ENCODE measurements at regions of chr10 and their contacts with region 1.

Region 1: GRCh38 chr10:46106410-46107255 is 60.6 kb upstream of the MSMB start:
- DNase-seq: peak; percentile 62 to 75 (median 70)
- ATAC-seq: peak; percentile 99
- H3K4me3 ChIP-seq: peak overlapping the region; percentile 45
- H3K27ac ChIP-seq: no peak overlapping the region; the same call in 2 of the 3 replicates
- H3K4me1 ChIP-seq: peaks cover 0 to 20% of the 10 kb centered on the region in 2 experiments; a peak in 3 of 5 replicates
- H3K27me3 ChIP-seq: peaks cover 8 to 13% of the 10 kb centered on the region in 2 experiments
- CTCF ChIP-seq: peak in 1 of 3 experiments; percentile 6; a peak in 1 of 6 replicates
- EP300 ChIP-seq: no peak
- POLR2A ChIP-seq: peak; percentile 71
- RAD21 ChIP-seq: peak in 1 of 2 experiments; percentile 34; a peak in 2 of 4 replicates

Region 2: DNA sequence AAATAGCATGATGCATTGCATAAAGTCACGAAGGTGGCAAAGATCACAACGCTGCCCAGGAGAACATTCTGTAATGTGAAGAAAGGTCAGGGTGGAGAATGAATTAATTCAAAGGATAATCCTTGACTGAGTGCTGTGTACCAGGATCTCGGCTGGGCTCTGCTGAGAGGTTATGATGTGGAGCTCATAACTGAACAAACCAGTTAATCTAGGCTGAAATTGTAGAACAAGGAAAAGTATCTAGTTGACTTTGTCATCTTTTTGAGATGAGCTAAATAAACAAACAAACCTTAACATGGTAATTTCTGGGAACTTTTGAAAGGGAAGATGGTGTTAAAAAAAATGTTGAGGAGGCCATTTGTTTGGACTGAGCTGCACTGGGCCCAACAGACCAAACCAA is 66.6 kb before region 1 on chr10:
- CTCF ChIA-PET with region 1: no interaction called
- POLR2A ChIA-PET with region 1: no interaction called
- in situ Hi-C with region 1: no loop called
- intact Hi-C with region 1: no loop called
- DNase-seq: no peak
- ATAC-seq: no peak
- H3K4me3 ChIP-seq: no peak overlapping the region
- H3K27ac ChIP-seq: no peak overlapping the region
- H3K4me1 ChIP-seq: peaks cover 0 to 4% of the 10 kb centered on the region in 2 experiments; a peak in 3 of 5 replicates
- H3K27me3 ChIP-seq: no peaks in the 10 kb centered on the region
- CTCF ChIP-seq: no peak
- EP300 ChIP-seq: no peak
- POLR2A ChIP-seq: no peak
- RAD21 ChIP-seq: no peak

Region 3: DNA sequence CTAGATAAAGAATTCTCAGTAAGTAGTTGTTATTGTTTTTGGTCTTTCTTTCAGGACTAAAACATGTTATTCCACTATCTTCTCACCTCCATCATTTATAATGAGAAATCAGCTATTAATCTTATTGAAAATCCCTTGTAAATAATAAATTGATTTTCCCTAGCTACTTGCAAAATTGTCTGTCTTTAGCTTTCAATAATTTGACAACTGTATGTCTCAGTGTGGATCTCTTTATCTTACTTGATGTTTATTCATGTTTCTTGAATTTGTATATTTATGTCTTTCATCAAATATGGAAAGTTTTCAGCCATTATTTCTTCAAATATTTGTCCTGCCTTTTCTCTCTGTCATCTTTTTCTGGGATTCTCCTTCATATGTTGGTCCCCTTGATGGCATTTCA is 63.1 kb after region 1 on chr10:
- CTCF ChIA-PET with region 1: no interaction called
- POLR2A ChIA-PET with region 1: no interaction called
- in situ Hi-C with region 1: loop called (anchors 5 kb)
- intact Hi-C with region 1: no loop called
- DNase-seq: no peak
- ATAC-seq: no peak
- H3K4me3 ChIP-seq: no peak overlapping the region
- H3K27ac ChIP-seq: no peak overlapping the region
- H3K4me1 ChIP-seq: no peaks in the 10 kb centered on the region
- H3K27me3 ChIP-seq: no peaks in the 10 kb centered on the region
- CTCF ChIP-seq: no peak
- EP300 ChIP-seq: no peak
- POLR2A ChIP-seq: no peak
- RAD21 ChIP-seq: no peak

Region 4: DNA sequence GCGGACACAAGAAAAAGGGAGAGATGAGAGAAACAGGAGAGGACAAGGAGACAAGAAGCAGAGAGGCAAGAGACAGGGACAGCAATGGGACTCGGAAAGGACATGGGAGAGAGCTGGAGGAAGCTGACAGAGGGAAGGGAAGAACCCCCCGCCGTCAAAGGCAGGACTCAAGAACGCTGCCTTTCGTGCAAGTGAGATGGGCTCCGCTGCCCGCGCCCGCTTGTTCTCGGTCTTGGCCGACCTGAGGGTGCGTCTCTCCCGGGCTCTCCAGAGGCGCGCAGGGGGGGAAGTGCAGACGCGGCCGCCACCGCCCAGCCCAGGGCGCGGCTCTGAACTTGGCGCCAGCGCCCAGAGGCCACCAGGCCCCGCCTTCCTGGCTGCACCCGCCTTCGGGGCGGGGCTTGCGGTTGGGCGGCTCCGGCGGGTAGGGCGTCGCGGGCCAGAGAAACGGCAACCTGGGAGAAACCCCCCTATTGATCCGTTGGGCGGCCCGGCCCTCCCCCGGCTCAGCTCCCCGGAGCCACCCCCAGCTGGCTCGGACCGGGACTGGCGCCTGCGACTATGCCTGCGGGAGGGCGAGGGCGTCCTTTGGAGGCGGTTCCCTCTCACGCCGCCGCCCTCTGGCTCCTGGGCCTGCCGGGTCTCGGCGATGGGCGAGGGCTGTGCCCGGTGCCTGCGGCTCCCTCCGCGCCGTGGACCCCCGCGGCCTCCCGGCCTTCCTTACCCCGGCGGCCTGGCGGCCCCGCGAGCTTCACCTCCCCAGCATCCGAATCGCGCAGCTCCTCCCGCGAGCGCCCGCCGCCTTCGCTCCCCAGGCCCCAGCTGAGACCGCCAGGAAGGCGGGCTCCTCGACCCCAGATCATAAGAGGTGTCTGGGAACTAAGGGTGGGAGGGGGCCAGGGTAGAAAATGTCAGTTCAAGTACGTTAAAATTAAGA is 177.9 kb after region 1 on chr10:
- CTCF ChIA-PET with region 1: no interaction called
- POLR2A ChIA-PET with region 1: interaction called, 4 read pairs
- in situ Hi-C with region 1: loop called (anchors 5 kb)
- intact Hi-C with region 1: no loop called
- DNase-seq: peak; percentile 95 to 100 (median 99)
- ATAC-seq: peak; percentile 99
- H3K4me3 ChIP-seq: peak overlapping the region; percentile 61
- H3K27ac ChIP-seq: peak overlapping the region; percentile 21; the same call in 2 of the 3 replicates
- H3K4me1 ChIP-seq: peaks cover 2 to 22% of the 10 kb centered on the region in 2 experiments; a peak in 3 of 5 replicates
- H3K27me3 ChIP-seq: peaks cover 32 to 57% of the 10 kb centered on the region in 2 experiments; a peak in 4 of 5 replicates
- CTCF ChIP-seq: peak in 1 of 3 experiments; percentile 1; a peak in 1 of 6 replicates
- EP300 ChIP-seq: 0 out of 2 replicates have a peak, but pooled peaks have one; percentile 2
- POLR2A ChIP-seq: peak; percentile 46; the same call in 1 of the 2 replicates
- RAD21 ChIP-seq: peak in 1 of 2 experiments; percentile 10; a peak in 1 of 4 replicates

Region 5: DNA sequence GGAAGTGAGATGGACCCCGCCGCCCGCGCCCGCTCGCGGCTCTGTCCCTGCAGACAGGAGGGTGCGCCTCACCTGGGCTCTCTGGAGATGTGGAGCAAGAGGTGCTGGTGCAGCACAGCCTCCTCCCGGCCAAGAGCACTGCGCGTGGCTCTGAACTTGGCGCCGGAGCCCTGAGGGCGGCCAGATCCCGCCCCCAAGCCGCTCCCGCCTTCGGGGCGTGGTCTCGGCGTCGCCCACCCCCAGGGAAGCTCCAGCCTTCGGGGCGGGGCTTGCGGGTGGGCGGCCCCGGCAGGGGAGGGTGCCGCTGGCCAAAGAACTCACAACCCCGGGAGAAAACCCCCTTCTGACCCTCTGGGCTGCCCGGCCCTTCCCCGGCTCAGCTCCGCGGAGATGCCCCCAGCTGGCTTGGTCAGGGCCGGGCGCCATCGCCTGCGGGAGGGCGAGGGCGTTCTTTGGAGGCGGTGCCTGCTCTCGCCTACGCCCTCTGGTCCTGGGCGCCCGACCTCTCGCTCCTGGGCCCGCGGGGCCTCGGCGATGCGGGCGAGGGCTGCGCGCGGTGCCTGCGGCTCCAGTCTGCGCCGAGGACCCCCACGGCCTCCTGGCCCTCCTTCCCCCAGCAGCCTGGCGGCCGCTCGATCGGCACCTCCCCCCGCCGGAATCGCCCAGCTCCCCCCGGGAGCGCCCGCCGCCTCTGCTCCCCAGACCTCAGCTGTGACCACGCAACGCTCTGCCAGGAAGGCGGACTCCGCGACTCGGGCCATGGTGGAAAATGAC is 1277.7 kb after region 1 on chr10 and contains the start of gene ZNF488:
- CTCF ChIA-PET with region 1: no interaction called
- POLR2A ChIA-PET with region 1: no interaction called
- in situ Hi-C with region 1: loop called (anchors 5 kb)
- intact Hi-C with region 1: no loop called
- DNase-seq: peak; percentile 89 to 100 (median 99)
- ATAC-seq: peak; percentile 99
- H3K4me3 ChIP-seq: peak within 1 kb of the TSS; percentile 59
- H3K27ac ChIP-seq: no peak within 1 kb of the TSS
- H3K4me1 ChIP-seq: peaks cover 0 to 14% of the 10 kb centered on the region in 2 experiments; a peak in 3 of 5 replicates
- H3K27me3 ChIP-seq: peaks cover 13 to 33% of the 10 kb centered on the region in 2 experiments
- CTCF ChIP-seq: no peak
- EP300 ChIP-seq: no peak
- POLR2A ChIP-seq: no peak
- RAD21 ChIP-seq: no peak
- polyA plus RNA-seq, gene ZNF488: 0.03 TPM in 1 of 2 experiments, not detected in the other

Measured in K562 (cell line).